ENCODE measurements at regions of chr11 and their contacts with region 1.

Region 1: GRCh38 chr11:93784935-93785360 is 866 bp downstream of the MED17 start:
- DNase-seq: peak; percentile 9 to 23
- H3K4me3 ChIP-seq: peak overlapping the region; percentile 86 to 97 (median 87)
- H3K27ac ChIP-seq: peak overlapping the region; percentile 88 to 96 (median 96)
- H3K4me1 ChIP-seq: peaks cover 25 to 27% of the 10 kb centered on the region in 2 donors
- H3K27me3 ChIP-seq: no peaks in the 10 kb centered on the region
- CTCF ChIP-seq: peak in 1 of 6 experiments; percentile 4
- POLR2A ChIP-seq: no peak

Region 2: DNA sequence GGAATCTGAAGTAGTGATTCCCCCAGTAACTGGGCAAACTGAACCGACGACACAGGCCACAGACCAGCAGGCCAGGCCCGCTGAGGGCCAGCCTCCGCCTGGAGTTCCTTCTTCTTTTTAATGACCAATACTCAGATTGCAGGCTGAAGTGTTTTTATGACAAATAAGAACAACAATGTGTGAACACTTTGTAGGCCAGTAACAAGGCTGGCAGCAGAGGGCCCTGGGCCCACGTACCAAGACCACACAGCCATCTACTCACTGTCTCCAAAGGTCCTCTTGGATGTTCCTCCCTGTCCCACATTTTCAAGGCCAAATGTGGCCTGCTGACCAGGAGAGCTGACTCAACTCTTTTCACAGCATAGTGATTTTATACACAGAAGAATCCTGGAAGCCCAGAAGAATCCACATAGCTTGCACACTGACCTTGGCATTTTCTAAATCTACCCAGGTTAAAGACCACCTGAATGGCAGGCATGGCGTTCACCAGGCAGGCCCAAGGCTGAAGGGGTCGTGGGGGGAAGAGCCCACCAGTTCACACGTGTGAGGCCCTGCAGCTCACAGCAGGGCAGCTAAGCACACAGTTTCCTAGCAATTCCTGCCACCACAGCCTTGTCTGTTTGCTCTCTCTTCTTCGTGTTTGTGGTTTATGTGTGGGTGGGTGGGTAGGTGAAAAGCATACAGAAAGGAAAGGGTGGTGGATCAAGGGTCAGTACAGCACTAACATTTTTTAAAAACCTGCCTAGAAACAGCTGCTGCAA is 255.1 kb before region 1 on chr11:
- intact Hi-C with region 1: no loop called
- DNase-seq: peak in 1 of 2 donors; percentile 20
- H3K4me3 ChIP-seq: no peak overlapping the region
- H3K27ac ChIP-seq: peak overlapping the region; percentile 42 to 79 (median 75)
- H3K4me1 ChIP-seq: peaks cover 38 to 62% of the 10 kb centered on the region in 2 donors
- H3K27me3 ChIP-seq: no peaks in the 10 kb centered on the region
- CTCF ChIP-seq: no peak
- POLR2A ChIP-seq: peak in 1 of 2 donors; percentile 7

Region 3: GRCh38 chr11:93694109-93694508 is 90.8 kb before region 1 on chr11:
- intact Hi-C with region 1: no loop called
- DNase-seq: no peak
- H3K4me3 ChIP-seq: no peak overlapping the region
- H3K27ac ChIP-seq: no peak overlapping the region
- H3K4me1 ChIP-seq: no peaks in the 10 kb centered on the region
- H3K27me3 ChIP-seq: no peaks in the 10 kb centered on the region
- CTCF ChIP-seq: no peak
- POLR2A ChIP-seq: no peak

Region 4: DNA sequence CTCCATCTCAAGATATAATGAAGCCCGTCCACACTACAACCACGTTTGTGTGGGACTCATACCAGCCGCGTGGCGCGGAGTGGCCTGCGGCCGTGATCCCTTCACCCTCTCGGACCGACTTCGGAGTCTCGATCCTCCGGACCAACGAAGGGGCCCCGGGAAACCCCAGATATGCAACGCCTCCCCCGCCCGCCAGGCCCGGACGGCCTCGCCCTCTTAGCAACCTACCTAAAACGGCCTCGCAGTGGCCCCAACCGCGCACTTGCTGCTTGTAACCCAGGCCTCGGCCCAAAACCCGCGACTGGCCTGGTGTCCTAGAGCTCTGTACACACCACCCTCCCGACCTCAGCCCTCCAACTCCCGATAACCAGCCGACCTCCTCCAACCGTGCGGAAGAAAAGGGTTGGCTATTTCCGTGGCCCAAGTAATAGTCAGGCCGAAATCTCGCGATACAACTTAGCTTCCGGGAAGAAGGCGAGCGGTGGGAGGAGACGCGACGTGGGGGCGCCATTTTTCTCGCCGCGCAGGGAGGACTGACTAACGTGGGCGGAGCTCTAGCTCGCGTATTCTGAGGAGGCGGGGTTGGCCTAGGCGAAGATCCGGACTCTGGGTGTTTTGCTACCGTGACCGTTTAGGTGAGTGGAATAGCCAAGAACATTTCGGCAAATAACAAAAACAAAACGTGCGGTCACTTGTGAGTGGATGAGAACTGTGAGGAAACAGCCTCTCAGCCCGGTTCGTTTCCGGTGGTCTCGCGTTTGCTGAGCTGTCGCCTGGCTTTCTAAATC is 43.7 kb before region 1 on chr11 and contains the starts of genes C11orf54 and TAF1D:
- intact Hi-C with region 1: loop called (anchors 5 kb)
- DNase-seq: peak; percentile 98 to 99
- H3K4me3 ChIP-seq: peak within 1 kb of the TSS; percentile 19 to 80 (median 71)
- H3K27ac ChIP-seq: peak within 1 kb of the TSS; percentile 87 to 94 (median 92)
- H3K4me1 ChIP-seq: peaks cover 24 to 29% of the 10 kb centered on the region in 2 donors
- H3K27me3 ChIP-seq: no peaks in the 10 kb centered on the region
- CTCF ChIP-seq: peak in 2 of 6 experiments; percentile 14 to 21
- POLR2A ChIP-seq: peak; percentile 29 to 91
- total RNA-seq, gene C11orf54: 46.6 to 71.4 (median 54.9) TPM
- total RNA-seq, gene TAF1D: 99.9 to 150 (median 125) TPM

Measured in thyroid gland (tissue), 4 donors.